A673 (cell line): ENCODE measurements at regions of chrX and their contacts with region 1.

Region 1: DNA sequence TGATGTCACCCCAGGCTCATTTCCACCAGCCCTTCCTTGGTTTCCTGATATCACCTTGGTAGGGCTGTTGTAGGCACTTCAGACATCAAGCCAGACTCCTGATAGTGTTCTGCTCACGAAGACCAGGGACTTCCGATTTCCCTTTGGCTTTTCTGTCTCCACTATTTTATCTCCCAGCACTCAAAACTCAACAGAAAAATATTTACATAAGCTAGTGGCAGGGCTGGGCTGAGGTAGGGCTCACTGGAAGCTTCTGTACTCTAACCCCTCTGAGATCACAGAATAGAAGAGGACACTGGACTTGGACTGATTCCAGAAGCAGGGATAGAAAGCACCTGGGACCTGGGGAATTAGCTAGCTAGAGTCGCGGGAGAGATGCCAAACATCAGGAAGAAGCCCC is 34.4 kb upstream of the EFNB1 start:
- DNase-seq: no peak
- H3K4me3 ChIP-seq: no peak overlapping the region
- H3K27ac ChIP-seq: no peak overlapping the region
- H3K4me1 ChIP-seq: no peaks in the 10 kb centered on the region
- H3K27me3 ChIP-seq: no peaks in the 10 kb centered on the region
- CTCF ChIP-seq: no peak

Region 2: DNA sequence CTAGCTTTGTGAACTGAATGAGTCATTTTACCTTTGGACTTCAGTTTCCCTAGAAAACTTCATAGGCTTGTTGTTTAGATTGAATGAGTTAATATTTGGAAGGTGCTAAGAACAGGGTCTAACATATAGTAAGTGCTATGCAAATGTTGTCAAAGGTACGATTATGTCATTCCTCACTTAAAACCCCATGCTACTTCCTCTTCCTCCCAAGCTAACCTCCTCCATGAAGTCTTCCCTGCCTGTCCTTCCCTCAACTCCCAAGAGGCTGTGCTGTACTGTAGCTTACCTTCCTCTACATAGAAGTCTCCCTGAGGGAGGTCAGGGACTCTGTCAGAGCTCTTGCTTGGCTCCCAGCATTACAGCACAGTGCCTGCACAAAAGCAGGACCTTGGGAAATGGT is 474.1 kb after region 1 on chrX:
- CTCF ChIA-PET with region 1: interaction called, 11 read pairs
- POLR2A ChIA-PET with region 1: no interaction called
- intact Hi-C with region 1: no loop called
- DNase-seq: no peak
- H3K4me3 ChIP-seq: no peak overlapping the region
- H3K27ac ChIP-seq: no peak overlapping the region
- H3K4me1 ChIP-seq: no peaks in the 10 kb centered on the region
- H3K27me3 ChIP-seq: no peaks in the 10 kb centered on the region
- CTCF ChIP-seq: no peak